B cell (primary cell): ENCODE measurements at regions of chr2 and their contacts with region 1.

Region 1: DNA sequence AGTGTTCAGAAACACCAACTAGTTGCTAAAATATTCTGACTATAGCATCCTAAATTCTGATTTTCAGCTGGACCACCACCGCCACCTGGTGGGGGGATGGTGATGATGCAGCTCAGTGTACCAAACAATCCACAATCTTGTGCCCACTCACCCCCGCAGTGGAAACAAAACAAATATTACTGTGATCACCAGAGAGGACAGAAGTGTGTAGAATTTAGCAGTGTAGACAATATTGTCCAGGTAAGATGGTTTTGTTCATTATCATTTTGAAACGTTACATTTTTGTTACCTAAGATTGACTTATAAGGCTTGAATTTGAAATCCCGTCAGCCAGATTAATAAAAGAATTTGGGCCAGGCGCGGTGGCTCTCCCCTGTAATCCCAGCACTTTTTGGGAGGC is 31.7 kb upstream of the UBXN4 start:
- DNase-seq: peak; percentile 70
- ATAC-seq: peak; percentile 63
- H3K4me3 ChIP-seq: no peak overlapping the region
- H3K4me3 Mint-ChIP-seq: no peak overlapping the region
- H3K27ac ChIP-seq: no peak overlapping the region
- H3K27ac Mint-ChIP-seq: no peak overlapping the region
- H3K4me1 ChIP-seq: no peaks in the 10 kb centered on the region
- H3K4me1 Mint-ChIP-seq: no peaks in the 10 kb centered on the region
- H3K27me3 ChIP-seq: no peaks in the 10 kb centered on the region
- H3K27me3 Mint-ChIP-seq: no peaks in the 10 kb centered on the region
- CTCF ChIP-seq: peak; percentile 94

Region 2: GRCh38 chr2:134988994-134989605 is 720.9 kb before region 1 on chr2:
- CTCF ChIA-PET with region 1: interaction called, 56 read pairs
- POLR2A ChIA-PET with region 1: no interaction called
- intact Hi-C with region 1: loop called (anchors 1 kb)
- DNase-seq: peak; percentile 30
- ATAC-seq: no peak
- H3K4me3 ChIP-seq: no peak overlapping the region
- H3K4me3 Mint-ChIP-seq: no peak overlapping the region
- H3K27ac ChIP-seq: no peak overlapping the region
- H3K27ac Mint-ChIP-seq: no peak overlapping the region
- H3K4me1 ChIP-seq: no peaks in the 10 kb centered on the region
- H3K4me1 Mint-ChIP-seq: no peaks in the 10 kb centered on the region
- H3K27me3 ChIP-seq: no peaks in the 10 kb centered on the region
- H3K27me3 Mint-ChIP-seq: peaks cover 10% of the 10 kb centered on the region
- CTCF ChIP-seq: peak; percentile 69

Region 3: DNA sequence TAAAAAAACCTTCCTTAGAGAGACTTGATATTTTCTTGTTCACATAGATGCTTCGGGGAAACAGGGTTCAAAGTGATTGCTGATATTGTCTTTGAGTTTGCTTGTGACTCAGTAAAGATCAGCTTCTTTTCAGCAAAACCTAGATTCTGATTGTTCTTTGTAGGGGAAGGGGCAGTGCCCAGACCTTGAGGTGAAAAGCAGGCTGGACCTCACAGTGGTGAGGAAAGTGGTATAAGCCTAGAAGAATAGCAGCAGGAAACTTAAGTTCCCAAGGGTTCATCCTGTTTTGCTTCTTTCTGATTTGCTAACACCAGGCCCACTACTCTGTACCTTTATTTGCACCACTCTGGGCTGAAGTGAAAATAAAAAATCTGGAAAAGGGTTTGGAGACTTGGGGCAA is 52.5 kb after region 1 on chr2:
- CTCF ChIA-PET with region 1: no interaction called
- POLR2A ChIA-PET with region 1: no interaction called
- intact Hi-C with region 1: no loop called
- DNase-seq: no peak
- ATAC-seq: no peak
- H3K4me3 ChIP-seq: no peak overlapping the region
- H3K4me3 Mint-ChIP-seq: no peak overlapping the region
- H3K27ac ChIP-seq: no peak overlapping the region
- H3K27ac Mint-ChIP-seq: no peak overlapping the region
- H3K4me1 ChIP-seq: no peaks in the 10 kb centered on the region
- H3K4me1 Mint-ChIP-seq: no peaks in the 10 kb centered on the region
- H3K27me3 ChIP-seq: no peaks in the 10 kb centered on the region
- H3K27me3 Mint-ChIP-seq: no peaks in the 10 kb centered on the region
- CTCF ChIP-seq: no peak